ENCODE measurements at regions of chr11 and their contacts with region 1.

Region 1: DNA sequence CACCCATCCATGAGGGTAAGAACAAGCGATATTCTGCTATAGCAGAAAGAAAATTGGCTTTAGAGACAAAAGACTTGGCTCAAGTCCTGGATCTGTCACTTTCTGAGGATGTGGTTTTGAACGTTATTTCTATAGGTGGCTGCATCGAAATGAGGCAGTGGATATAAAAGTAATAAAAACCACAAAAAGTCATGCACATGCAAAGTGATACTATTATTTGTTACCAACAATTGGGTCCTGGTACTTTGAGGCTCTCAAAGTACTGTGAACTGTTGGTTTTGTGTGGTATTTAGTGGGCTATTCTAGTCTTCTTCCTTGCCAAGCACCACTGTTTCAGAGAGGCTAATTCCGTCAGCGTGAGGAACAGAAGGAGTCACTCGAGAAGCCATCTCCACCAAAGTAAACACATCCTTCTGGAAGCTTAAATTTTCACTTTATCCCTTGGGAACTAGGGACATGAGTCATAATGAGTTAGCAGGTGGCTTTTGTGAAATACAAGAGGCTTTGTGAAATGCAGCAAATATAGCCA is 13.1 kb downstream of the UBASH3B start:
- DNase-seq: peak; percentile 63
- H3K4me3 ChIP-seq: no peak overlapping the region
- CTCF ChIP-seq: no peak

Region 2: DNA sequence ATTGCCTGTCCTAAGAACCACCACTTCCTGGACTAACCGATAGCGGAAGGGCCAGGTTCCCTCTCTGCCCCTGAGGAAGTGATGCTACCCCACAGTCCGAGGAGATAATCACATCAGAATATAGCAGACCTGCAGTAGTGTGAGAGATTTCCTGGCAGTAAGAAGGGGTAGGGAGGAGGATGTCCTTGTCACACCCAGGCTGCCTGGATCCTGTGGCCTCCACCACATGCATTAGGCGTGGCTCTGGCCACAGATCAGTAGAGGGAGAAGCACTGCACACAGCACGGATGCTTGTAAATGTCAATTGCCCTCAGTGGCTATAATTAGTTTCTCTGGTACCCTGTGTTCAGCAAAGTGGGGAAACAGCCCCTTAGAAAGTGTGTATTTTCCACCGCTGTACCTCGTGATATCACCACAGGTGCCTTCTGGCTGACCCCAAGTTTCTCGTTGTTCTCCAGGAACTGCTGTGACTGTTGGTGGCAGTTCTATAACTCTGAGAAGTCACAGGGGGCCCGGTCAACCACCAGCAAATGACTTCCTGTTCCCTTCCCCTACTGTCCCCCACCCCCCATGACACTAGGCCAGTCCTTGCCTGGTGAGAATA is 48.7 kb after region 1 on chr11:
- in situ Hi-C with region 1: loop called (anchors 5 kb)
- DNase-seq: no peak
- H3K4me3 ChIP-seq: no peak overlapping the region
- CTCF ChIP-seq: no peak

Region 3: DNA sequence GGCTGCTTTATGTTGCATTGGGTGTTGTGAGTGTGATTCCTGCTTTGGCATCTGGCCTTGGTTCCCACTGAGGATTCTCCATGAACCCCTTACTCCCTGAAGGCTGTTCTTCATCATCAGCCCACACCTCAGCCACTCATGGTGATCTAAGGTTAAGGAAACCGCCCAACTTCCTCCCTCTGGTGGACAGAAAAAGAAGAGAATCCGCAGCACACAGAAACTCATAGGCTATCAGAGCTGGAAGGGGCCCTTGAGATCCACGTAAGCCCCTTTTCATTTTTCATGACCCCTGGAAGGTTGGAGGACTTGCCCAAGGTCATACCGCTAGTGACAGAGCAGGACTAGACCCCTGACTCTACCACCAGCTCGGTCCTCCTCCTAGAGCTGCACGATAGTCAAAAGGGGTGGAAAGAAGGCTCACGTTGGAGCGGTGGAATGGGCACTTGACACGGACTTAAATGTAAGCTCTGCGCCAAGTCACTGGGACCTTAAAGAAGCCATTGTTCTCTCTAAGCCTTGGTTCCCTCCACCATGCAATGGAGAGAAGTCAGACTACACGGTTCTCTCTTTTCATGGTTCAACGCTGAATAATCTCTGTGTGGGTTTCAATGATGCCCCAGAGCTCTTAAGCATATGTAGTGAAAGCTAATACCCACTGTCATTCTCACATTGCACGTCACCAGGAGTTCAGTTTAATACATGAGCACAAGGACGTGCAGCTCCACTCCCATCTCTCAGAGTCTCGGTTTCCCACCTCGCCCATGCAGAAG is 86.1 kb after region 1 on chr11:
- in situ Hi-C with region 1: loop called (anchors 5 kb)
- DNase-seq: no peak
- H3K4me3 ChIP-seq: no peak overlapping the region
- CTCF ChIP-seq: peak; percentile 58

Measured in astrocyte of the cerebellum (primary cell).